ENCODE measurements at regions of chr22 and their contacts with region 1.

Region 1: GRCh38 chr22:17237038-17237668 is 17.9 kb upstream of the ADA2 start:
- DNase-seq: peak in 6 of 9 donors; percentile 31 to 50 (median 40)
- ATAC-seq: peak; percentile 80
- H3K4me3 ChIP-seq: peak overlapping the region; percentile 61
- H3K4me3 Mint-ChIP-seq: peak overlapping the region; percentile 78 to 96 (median 91)
- H3K27ac ChIP-seq: peak overlapping the region; percentile 73
- H3K27ac Mint-ChIP-seq: peak overlapping the region; percentile 92 to 99 (median 97)
- H3K4me1 ChIP-seq: peaks cover 0 to 12% of the 10 kb centered on the region in 2 donors
- H3K4me1 Mint-ChIP-seq: peaks cover 8 to 27% (median 11%) of the 10 kb centered on the region in 7 donors
- H3K27me3 ChIP-seq: no peaks in the 10 kb centered on the region
- H3K27me3 Mint-ChIP-seq: no peaks in the 10 kb centered on the region

Region 2: DNA sequence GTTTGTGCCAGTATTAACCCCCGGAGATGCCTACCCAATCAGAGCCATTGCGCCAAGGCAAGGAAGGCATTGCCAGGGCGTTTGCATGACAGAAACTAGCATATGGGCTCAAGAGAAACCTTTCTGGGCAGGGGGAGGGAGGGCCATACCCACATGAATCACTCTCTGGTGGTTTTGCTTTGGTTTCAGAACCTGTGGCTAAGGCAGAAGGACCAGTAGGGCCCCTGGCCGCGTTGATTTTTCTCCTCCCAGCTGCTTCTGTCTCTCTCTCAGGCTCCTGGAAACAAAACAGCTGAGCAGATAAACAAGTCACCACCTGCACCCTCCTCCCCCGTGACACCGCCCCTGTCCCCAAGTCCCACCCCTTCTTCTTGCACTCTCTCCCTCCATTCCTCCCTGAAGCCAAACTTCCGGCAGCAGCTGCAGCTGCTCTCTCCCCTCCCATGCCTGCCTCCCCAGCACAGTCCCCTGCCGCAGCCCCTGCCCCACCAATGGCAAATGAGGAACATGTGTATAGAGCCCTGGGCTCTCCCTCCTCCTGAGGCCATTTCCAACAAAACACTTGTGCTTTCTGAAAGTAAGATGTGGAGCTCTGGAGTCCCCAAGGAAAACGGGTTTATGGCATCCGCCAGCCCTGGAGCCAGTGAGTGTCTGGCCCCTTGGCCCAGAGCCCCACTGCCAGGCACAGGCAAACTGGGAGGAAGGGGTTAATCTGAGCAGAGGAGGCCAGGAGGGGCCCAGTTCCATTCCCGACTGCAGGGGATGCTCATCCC is 21.0 kb after region 1 on chr22:
- CTCF ChIA-PET with region 1: no interaction called
- POLR2A ChIA-PET with region 1: interaction called, 5 read pairs
- intact Hi-C with region 1: loop called in 1 of 2 experiments (anchors 2 kb)
- DNase-seq: peak in 8 of 9 donors; percentile 37 to 65 (median 52)
- ATAC-seq: peak; percentile 82
- H3K4me3 ChIP-seq: peak overlapping the region; percentile 38
- H3K4me3 Mint-ChIP-seq: peak overlapping the region; percentile 23 to 82 (median 67)
- H3K27ac ChIP-seq: peak overlapping the region; percentile 41
- H3K27ac Mint-ChIP-seq: peak overlapping the region; percentile 59 to 93 (median 89)
- H3K4me1 ChIP-seq: peaks cover 0 to 20% of the 10 kb centered on the region in 2 donors
- H3K4me1 Mint-ChIP-seq: peaks cover 13 to 36% (median 26%) of the 10 kb centered on the region in 7 donors
- H3K27me3 ChIP-seq: no peaks in the 10 kb centered on the region
- H3K27me3 Mint-ChIP-seq: no peaks in the 10 kb centered on the region

Region 3: GRCh38 chr22:17303840-17304779 is 67.0 kb after region 1 on chr22:
- CTCF ChIA-PET with region 1: no interaction called
- POLR2A ChIA-PET with region 1: no interaction called
- intact Hi-C with region 1: loop called in 1 of 2 experiments (anchors 5 kb)
- DNase-seq: peak; percentile 9 to 78 (median 56)
- ATAC-seq: peak; percentile 97
- H3K4me3 ChIP-seq: peak overlapping the region; percentile 27
- H3K4me3 Mint-ChIP-seq: peak overlapping the region; percentile 7 to 86 (median 58)
- H3K27ac ChIP-seq: peak overlapping the region; percentile 51
- H3K27ac Mint-ChIP-seq: peak overlapping the region; percentile 36 to 95 (median 87)
- H3K4me1 ChIP-seq: peaks cover 12 to 14% of the 10 kb centered on the region in 2 donors
- H3K4me1 Mint-ChIP-seq: peaks cover 6 to 46% (median 28%) of the 10 kb centered on the region in 7 donors
- H3K27me3 ChIP-seq: no peaks in the 10 kb centered on the region
- H3K27me3 Mint-ChIP-seq: peaks cover 0 to 2% (median 0%) of the 10 kb centered on the region in 5 donors

Measured in naive thymus-derived CD4-positive, alpha-beta T cell (primary cell).